A673 (cell line): ENCODE measurements at regions of chr17 and their contacts with region 1.

Region 1: GRCh38 chr17:57130761-57131461 is 45.9 kb downstream of the AKAP1 start:
- DNase-seq: peak; percentile 87
- H3K4me3 ChIP-seq: peak overlapping the region; percentile 28
- H3K27ac ChIP-seq: no peak overlapping the region
- H3K4me1 ChIP-seq: peaks cover 4% of the 10 kb centered on the region
- H3K27me3 ChIP-seq: no peaks in the 10 kb centered on the region
- CTCF ChIP-seq: peak; percentile 75

Region 2: DNA sequence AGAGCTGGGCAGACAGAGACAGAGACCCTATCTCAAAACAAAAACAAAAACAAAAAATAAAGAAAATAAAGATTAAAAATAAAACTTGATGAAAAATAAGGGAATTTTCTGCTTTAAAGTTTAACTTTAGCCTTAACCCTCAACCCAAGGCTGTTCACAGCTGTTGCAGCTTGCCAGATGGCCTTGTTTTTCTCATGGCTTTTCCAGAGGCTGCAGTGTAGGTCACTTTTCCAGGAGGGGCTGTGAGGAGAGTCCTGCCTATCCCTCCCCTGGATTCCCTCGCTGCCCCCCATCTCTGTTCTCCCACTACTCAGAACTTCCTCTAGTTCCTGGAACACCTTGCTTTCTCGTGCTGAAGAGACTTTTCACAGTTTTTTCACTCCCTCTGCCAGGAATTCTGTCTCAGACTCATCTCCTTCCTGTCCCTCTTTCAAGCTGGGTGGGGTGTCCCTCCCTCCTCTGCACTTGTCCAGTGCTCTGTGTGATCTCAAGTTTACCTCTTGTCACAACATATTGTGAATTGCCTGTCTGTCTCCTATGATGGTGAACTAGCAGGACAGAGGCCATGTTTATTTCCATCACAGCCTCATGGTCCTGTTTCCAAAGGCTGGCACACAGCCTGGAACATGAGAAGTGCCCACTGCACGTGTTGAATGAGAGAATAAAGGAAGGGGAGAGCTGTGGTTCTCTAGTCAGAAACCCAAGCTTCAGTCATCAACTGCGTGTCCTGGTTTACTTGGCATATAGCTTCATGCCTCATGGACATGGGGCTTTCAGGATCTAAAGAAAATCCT is 55.5 kb after region 1 on chr17:
- CTCF ChIA-PET with region 1: interaction called, 17 read pairs
- POLR2A ChIA-PET with region 1: no interaction called
- intact Hi-C with region 1: no loop called
- DNase-seq: no peak
- H3K4me3 ChIP-seq: no peak overlapping the region
- H3K27ac ChIP-seq: no peak overlapping the region
- H3K4me1 ChIP-seq: no peaks in the 10 kb centered on the region
- H3K27me3 ChIP-seq: no peaks in the 10 kb centered on the region
- CTCF ChIP-seq: no peak

Region 3: DNA sequence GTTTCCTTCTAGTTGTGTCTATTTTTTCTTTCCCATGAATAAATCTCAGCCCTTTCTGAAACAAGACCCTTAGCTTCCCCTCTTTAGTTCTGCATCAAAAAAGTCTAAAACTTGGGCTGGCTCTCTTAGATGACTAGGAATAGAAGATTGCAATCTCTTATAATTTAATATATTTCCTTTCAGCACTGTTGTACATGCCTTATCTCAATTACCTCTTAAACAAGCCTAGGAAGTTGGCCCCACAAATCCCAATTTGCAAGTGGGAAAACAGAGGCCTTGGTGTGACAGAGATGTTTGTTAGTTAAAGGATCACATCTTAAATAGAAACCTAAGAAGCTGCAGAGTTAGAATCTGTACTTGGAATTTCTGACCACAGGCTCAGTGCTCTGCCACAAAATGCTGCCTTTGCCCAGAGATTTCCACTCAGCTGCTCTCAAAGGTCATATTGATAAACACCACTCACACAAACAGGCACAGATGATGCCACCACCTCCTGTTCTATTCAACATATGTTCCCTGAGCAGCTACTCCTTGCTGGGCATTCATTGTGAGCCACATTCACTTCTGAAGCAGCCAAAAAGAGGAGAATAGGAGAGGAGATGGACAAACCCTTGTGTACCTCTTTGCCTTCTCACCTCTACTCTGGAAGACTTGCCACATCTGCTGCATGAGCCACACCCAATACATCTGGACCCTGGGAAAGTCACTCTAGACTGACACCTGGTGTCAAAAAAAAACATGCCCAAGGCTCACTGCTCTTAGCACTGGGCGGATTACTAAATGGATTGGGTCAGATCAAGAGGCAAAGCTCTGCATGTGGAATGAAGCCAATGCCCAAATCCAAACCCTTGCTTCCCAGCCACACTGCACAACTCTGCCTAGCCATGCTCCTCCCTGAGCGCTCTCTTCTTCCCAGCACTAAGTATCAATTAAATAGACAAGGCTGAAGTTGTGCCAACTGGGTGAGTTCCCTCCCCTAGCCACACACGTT is 608.8 kb after region 1 on chr17:
- CTCF ChIA-PET with region 1: no interaction called
- POLR2A ChIA-PET with region 1: no interaction called
- intact Hi-C with region 1: loop called (anchors 2 kb)
- DNase-seq: peak; percentile 54
- H3K4me3 ChIP-seq: no peak overlapping the region
- H3K27ac ChIP-seq: no peak overlapping the region
- H3K4me1 ChIP-seq: no peaks in the 10 kb centered on the region
- H3K27me3 ChIP-seq: no peaks in the 10 kb centered on the region
- CTCF ChIP-seq: peak; percentile 62

Region 4: DNA sequence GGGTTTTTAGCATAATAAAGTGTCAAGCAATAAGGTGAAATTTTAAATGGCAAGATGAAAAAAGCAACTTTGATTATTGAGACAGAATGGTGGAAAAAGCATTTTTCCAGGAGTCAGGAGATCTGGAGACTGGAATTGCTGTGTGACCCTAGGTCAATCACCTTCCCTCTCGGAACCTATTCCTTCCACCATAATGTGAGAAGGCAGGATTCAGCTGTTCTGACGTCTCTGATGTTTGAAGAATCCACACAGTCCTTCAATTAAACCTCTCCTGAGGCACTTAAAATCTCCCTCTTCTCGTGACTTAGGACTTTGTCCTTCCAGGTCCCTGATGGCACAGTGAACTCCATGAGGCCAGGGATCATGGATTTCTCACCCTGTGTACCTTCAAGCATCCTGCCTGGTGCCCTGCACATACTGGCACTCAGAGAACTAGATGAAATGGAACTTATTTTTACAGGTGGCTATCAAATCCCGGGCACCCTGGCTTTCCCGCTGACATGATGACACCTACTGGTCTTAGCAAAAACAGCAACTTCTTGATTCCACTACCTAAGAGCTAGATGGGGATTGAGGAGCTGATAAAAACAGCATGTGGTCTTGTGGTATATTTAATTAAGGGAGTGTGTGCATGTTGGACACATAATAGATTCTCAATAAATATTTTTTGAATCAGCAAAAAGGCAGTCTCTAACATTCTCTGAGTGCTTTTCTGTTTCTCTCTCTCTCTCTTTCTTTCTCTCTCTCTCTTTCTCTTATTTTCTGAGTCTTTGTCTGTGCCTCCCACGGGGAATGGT is 616.5 kb after region 1 on chr17:
- CTCF ChIA-PET with region 1: interaction called, 3 read pairs
- POLR2A ChIA-PET with region 1: no interaction called
- intact Hi-C with region 1: loop called (anchors 2 kb)
- DNase-seq: peak; percentile 77
- H3K4me3 ChIP-seq: no peak overlapping the region
- H3K27ac ChIP-seq: no peak overlapping the region
- H3K4me1 ChIP-seq: no peaks in the 10 kb centered on the region
- H3K27me3 ChIP-seq: no peaks in the 10 kb centered on the region
- CTCF ChIP-seq: peak; percentile 90